GM12878 (cell line): ENCODE measurements at regions of chr2 and their contacts with region 1.

Region 1: DNA sequence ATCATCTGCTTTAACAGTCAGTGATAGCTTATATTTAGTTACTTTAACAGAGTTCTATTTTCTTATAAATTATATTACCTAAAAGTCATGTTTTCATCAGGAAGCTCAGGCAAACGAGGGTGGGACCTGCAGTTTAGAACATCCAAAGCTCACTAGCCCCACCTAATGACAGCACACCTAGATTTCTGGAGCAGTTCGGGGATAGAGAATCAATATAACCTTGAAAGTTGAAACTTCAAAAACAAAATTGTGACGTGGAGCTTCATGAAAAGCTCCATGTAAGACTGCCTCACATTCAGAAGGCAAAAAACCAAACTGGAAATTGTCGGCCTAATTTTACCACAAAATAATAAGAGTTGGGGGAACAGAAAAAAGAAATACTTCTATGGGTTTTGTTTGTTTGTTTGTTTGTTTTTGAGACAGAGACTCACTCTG is 185.9 kb upstream of the CCDC150 start:
- DNase-seq: peak; percentile 72
- ATAC-seq: peak; percentile 90
- H3K4me3 ChIP-seq: no peak overlapping the region
- H3K27ac ChIP-seq: peak overlapping the region; percentile 64
- H3K4me1 ChIP-seq: peaks cover 10% of the 10 kb centered on the region
- H3K27me3 ChIP-seq: no peaks in the 10 kb centered on the region
- CTCF ChIP-seq: peak; percentile 74 to 81 (median 79)
- EP300 ChIP-seq: no peak
- POLR2A ChIP-seq: no peak
- RAD21 ChIP-seq: peak; percentile 99

Region 2: DNA sequence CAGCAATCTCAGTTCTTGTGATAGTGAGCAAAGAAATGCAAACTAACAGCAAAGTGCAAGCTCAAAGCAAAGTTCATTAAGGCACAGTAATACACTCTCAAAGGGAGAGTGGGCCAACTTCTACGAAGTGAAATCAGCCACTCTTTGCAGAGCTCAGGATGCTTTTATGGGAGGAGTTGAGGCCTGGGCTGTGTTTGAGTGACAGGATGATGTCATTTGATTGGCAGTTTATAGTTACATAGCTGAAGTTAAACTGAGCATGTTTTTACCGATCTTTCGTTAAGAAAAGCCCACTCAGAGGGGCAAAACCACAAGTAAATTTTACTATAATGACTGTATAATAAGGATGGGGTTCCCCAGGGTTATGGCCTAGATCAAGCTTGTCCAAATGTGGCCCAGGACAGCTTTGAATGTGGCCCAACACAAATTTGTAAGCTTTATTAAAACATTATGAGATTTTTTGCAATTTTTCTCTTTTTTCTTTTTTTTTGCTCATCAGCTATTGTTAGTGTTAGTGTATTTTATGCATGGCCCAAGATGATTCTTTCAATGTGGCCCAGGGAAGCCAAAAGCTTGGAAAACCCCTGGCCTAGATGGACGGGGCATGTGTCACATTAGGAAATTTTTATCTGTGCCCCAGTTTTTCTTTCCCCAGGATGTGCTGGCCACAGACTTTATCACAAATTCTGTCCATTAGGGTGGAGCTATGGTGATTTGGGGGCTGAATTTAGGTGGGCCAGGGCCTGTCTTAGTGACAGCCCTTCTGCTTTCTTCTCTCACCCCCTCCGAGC is 376.7 kb before region 1 on chr2:
- CTCF ChIA-PET with region 1: interaction called, 104 read pairs
- POLR2A ChIA-PET with region 1: no interaction called
- RAD21 ChIA-PET with region 1: interaction called, 51 read pairs
- SMC1A ChIA-PET with region 1: interaction called, 80 read pairs
- in situ Hi-C with region 1: loop called (anchors 5 kb)
- intact Hi-C with region 1: loop called (anchors 2 kb)
- DNase-seq: no peak
- ATAC-seq: peak; percentile 68
- H3K4me3 ChIP-seq: no peak overlapping the region
- H3K27ac ChIP-seq: no peak overlapping the region; the same call in 1 of the 2 replicates
- H3K4me1 ChIP-seq: peaks cover 14% of the 10 kb centered on the region
- H3K27me3 ChIP-seq: no peaks in the 10 kb centered on the region
- CTCF ChIP-seq: no peak
- EP300 ChIP-seq: no peak
- POLR2A ChIP-seq: no peak
- RAD21 ChIP-seq: no peak

Region 3: DNA sequence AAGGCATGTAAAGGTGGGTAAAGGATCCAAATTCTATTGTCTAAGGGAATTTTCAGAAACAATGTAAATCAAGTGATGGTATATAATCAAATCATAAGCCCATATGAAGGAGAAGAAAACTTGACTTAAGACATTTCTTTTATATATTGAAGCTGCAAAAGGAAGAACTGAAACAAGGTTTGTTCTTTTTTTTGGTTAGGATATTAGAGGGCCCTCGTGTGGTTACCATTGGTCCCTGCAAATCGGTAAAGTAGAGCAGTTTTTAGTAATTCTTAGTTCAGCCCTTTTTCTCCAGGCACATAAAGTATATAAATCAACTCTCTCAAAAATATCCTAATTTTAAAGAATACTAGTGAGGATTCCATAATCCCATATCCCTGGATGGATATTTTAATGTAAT is 176.6 kb before region 1 on chr2:
- CTCF ChIA-PET with region 1: interaction called, 23 read pairs
- POLR2A ChIA-PET with region 1: interaction called, 3 read pairs
- RAD21 ChIA-PET with region 1: interaction called, 20 read pairs
- SMC1A ChIA-PET with region 1: interaction called, 37 read pairs
- in situ Hi-C with region 1: no loop called
- intact Hi-C with region 1: no loop called
- DNase-seq: no peak
- ATAC-seq: peak; percentile 48
- H3K4me3 ChIP-seq: no peak overlapping the region
- H3K27ac ChIP-seq: no peak overlapping the region
- H3K4me1 ChIP-seq: peaks cover 27% of the 10 kb centered on the region
- H3K27me3 ChIP-seq: no peaks in the 10 kb centered on the region
- CTCF ChIP-seq: peak; percentile 61 to 72 (median 66); a peak in 5 of 6 replicates
- EP300 ChIP-seq: no peak
- POLR2A ChIP-seq: no peak
- RAD21 ChIP-seq: peak; percentile 82

Region 4: GRCh38 chr2:196322973-196323810 is 130.4 kb before region 1 on chr2:
- CTCF ChIA-PET with region 1: interaction called, 13 read pairs
- POLR2A ChIA-PET with region 1: interaction called, 3 read pairs
- RAD21 ChIA-PET with region 1: interaction called, 4 read pairs
- SMC1A ChIA-PET with region 1: interaction called, 5 read pairs
- in situ Hi-C with region 1: no loop called
- intact Hi-C with region 1: no loop called
- DNase-seq: no peak
- ATAC-seq: no peak
- H3K4me3 ChIP-seq: no peak overlapping the region
- H3K27ac ChIP-seq: no peak overlapping the region
- H3K4me1 ChIP-seq: no peaks in the 10 kb centered on the region
- H3K27me3 ChIP-seq: no peaks in the 10 kb centered on the region
- CTCF ChIP-seq: no peak
- EP300 ChIP-seq: no peak
- POLR2A ChIP-seq: no peak
- RAD21 ChIP-seq: no peak

Region 5: GRCh38 chr2:196384729-196385128 is 68.9 kb before region 1 on chr2:
- CTCF ChIA-PET with region 1: interaction called, 39 read pairs
- POLR2A ChIA-PET with region 1: interaction called, 3 read pairs
- RAD21 ChIA-PET with region 1: interaction called, 37 read pairs
- SMC1A ChIA-PET with region 1: interaction called, 33 read pairs
- in situ Hi-C with region 1: no loop called
- intact Hi-C with region 1: no loop called
- DNase-seq: no peak
- ATAC-seq: peak; percentile 56
- H3K4me3 ChIP-seq: peak overlapping the region; percentile 21
- H3K27ac ChIP-seq: peak overlapping the region; percentile 63
- H3K4me1 ChIP-seq: peaks cover 34% of the 10 kb centered on the region
- H3K27me3 ChIP-seq: no peaks in the 10 kb centered on the region
- CTCF ChIP-seq: no peak
- EP300 ChIP-seq: no peak
- POLR2A ChIP-seq: no peak
- RAD21 ChIP-seq: no peak

Region 6: DNA sequence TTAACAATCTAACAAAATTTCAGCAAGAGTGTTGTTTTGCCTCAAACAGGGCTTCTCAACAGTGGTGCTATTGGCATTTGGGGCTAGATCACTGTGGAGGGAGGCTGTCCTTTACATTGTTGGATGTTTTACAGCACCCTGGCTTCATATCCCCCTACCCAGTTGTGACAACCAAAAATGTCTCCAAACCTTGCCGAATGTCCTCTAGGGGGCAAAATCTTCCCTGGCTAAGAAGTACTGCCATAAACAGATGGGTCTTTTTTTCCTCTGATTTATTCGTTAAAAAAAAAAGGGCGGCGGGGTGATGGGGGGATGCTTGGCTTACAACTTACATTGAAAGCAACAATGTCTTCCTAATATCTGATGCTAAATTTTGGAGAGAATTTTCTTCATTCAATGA is 21.7 kb before region 1 on chr2:
- CTCF ChIA-PET with region 1: interaction called, 100 read pairs
- POLR2A ChIA-PET with region 1: no interaction called
- RAD21 ChIA-PET with region 1: interaction called, 66 read pairs
- SMC1A ChIA-PET with region 1: interaction called, 72 read pairs
- in situ Hi-C with region 1: no loop called
- intact Hi-C with region 1: no loop called
- DNase-seq: no peak
- ATAC-seq: 0 out of 3 replicates have a peak, but pooled peaks have one; percentile 32
- H3K4me3 ChIP-seq: no peak overlapping the region
- H3K27ac ChIP-seq: no peak overlapping the region
- H3K4me1 ChIP-seq: peaks cover 28% of the 10 kb centered on the region
- H3K27me3 ChIP-seq: no peaks in the 10 kb centered on the region
- CTCF ChIP-seq: peak in 2 of 3 experiments; percentile 6 to 15; a peak in 1 of 6 replicates
- EP300 ChIP-seq: no peak
- POLR2A ChIP-seq: no peak
- RAD21 ChIP-seq: no peak

Region 7: GRCh38 chr2:197838036-197838435 is 1384.4 kb after region 1 on chr2:
- CTCF ChIA-PET with region 1: no interaction called
- POLR2A ChIA-PET with region 1: no interaction called
- RAD21 ChIA-PET with region 1: no interaction called
- SMC1A ChIA-PET with region 1: no interaction called
- in situ Hi-C with region 1: no loop called
- intact Hi-C with region 1: no loop called
- DNase-seq: peak; percentile 30
- ATAC-seq: peak; percentile 97
- H3K4me3 ChIP-seq: no peak overlapping the region
- H3K27ac ChIP-seq: no peak overlapping the region
- H3K4me1 ChIP-seq: no peaks in the 10 kb centered on the region
- H3K27me3 ChIP-seq: no peaks in the 10 kb centered on the region
- CTCF ChIP-seq: no peak
- EP300 ChIP-seq: no peak
- POLR2A ChIP-seq: no peak
- RAD21 ChIP-seq: no peak